Prostate gland (tissue), 2 donors: ENCODE measurements at regions of chr21 and their contacts with region 1.

Region 1: DNA sequence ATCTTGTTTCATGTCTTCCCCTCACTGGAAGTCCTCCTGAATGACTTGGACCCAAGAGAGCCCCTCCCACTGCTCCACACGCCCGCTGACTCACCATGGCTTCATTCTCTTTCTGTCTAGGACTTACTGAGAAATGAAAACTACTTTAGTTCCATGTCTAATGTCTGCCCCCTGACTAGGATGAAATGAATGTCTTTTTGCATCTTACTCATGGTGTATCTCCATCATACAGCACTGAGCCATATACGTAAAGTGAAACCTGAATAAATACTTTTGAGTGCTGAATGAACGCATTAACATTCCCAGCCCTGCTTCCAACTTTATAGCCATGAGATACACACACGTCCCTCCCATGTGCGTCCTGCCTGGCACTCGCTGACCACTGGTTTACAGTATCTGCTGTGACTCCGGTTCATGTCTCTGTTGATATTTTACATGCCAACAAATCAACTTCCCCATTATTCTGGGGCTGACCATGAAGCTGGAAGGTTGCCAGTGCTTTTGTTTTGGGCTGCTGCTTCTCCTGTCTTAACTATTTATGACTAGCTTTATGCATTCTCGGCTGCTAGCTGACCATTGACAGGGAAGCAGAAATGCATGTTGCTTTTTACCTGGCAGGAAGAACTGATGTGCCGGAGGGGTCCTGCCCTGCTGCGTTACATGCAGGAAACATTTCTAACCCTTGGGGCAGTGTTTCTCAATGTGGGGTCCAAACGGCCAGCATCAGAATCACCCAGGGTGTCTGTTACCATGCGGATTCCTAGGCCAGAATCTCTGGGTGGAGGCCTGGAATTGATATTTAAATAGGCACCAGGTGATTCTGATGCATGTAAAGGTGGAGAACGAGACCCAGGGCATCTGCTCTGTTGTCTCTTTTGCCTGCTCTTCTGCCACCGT is 182.4 kb downstream of the PCP4 start:
- DNase-seq: no peak
- H3K4me3 ChIP-seq: no peak overlapping the region
- H3K27ac ChIP-seq: peak overlapping the region in 1 of 2 donors; percentile 30
- H3K4me1 ChIP-seq: peaks cover 8% of the 10 kb centered on the region
- H3K27me3 ChIP-seq: no peaks in the 10 kb centered on the region
- CTCF ChIP-seq: no peak
- POLR2A ChIP-seq: no peak

Region 2: GRCh38 chr21:39776589-39776988 is 273.1 kb before region 1 on chr21:
- intact Hi-C with region 1: no loop called
- DNase-seq: no peak
- H3K4me3 ChIP-seq: no peak overlapping the region
- H3K27ac ChIP-seq: no peak overlapping the region
- H3K4me1 ChIP-seq: no peaks in the 10 kb centered on the region
- H3K27me3 ChIP-seq: peaks cover 2% of the 10 kb centered on the region
- CTCF ChIP-seq: no peak
- POLR2A ChIP-seq: no peak

Region 3: DNA sequence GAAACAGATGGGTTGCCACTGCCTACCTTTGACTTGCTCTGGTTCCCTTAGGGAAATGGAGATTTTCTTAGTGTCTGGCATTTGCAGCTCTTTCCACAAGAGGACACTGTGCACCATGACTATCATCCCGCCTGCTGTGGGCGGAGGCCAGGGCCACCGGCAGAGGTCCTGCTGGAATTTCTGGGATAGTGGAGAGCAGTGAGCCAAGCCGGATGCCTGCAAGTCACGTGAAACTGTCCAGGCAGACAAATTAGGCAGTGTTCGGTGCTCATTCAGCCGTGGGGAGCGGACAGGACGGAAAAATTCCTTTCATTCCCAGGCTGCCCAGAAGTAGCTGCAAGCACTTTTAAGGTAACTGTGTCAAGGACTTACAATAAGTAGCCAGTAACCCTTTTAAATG is 261.3 kb before region 1 on chr21:
- intact Hi-C with region 1: loop called (anchors 5 kb)
- DNase-seq: peak; percentile 89
- H3K4me3 ChIP-seq: peak overlapping the region; percentile 19 to 24
- H3K27ac ChIP-seq: peak overlapping the region in 1 of 2 donors; percentile 17
- H3K4me1 ChIP-seq: no peaks in the 10 kb centered on the region
- H3K27me3 ChIP-seq: no peaks in the 10 kb centered on the region
- CTCF ChIP-seq: peak; percentile 71 to 99 (median 90)
- POLR2A ChIP-seq: no peak

Region 4: GRCh38 chr21:39885119-39885848 is 164.4 kb before region 1 on chr21:
- intact Hi-C with region 1: loop called (anchors 5 kb)
- DNase-seq: no peak
- H3K4me3 ChIP-seq: no peak overlapping the region
- H3K27ac ChIP-seq: peak overlapping the region in 1 of 2 donors; percentile 27
- H3K4me1 ChIP-seq: no peaks in the 10 kb centered on the region
- H3K27me3 ChIP-seq: no peaks in the 10 kb centered on the region
- CTCF ChIP-seq: no peak
- POLR2A ChIP-seq: no peak

Region 5: DNA sequence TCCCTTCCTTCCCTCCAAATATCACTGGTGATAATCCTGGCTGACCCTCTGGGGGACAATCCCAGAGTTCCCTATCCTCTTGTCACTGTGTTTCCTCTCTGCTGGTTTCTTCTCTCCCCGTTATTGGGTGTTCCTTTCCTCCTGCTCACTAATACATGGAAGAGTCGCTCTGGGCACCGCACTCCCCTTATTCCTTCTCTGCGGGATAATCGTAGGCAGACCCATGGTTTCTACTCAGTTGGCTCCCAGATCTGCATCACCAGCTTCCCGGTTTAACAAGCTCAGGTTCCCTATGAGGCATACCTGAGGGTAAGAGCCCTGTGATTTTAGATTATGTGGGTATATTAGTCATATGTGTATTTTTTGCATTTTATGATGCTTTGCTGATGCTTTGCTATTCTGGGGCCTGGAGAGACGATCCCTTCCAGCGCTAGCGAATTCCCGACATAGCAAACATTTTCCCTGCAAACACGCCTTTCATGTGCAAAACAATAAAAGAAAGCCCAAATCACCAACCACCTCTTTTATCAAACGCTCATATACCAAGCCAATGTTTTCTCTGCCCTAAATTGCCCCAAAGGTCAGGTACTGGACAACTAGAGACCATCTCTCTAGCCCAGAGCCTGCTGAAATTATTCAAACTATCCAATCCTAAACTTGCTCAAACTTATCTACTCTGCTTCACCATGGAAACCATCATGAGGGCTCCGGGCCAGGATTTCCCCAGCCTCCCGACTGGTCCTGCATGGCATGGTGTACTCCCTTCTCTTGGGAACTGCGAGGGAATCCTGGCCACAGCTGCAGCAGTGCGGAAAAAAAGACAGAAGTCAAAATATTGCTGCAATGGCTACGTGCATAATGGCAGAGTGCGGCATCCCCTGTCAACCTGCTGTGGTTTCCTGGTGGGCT is 98.2 kb before region 1 on chr21:
- intact Hi-C with region 1: loop called (anchors 5 kb)
- DNase-seq: no peak
- H3K4me3 ChIP-seq: no peak overlapping the region
- H3K27ac ChIP-seq: peak overlapping the region in 1 of 2 donors; percentile 49
- H3K4me1 ChIP-seq: no peaks in the 10 kb centered on the region
- H3K27me3 ChIP-seq: no peaks in the 10 kb centered on the region
- CTCF ChIP-seq: no peak
- POLR2A ChIP-seq: no peak

Region 6: GRCh38 chr21:40385892-40386599 is 336.4 kb after region 1 on chr21:
- intact Hi-C with region 1: no loop called
- DNase-seq: peak; percentile 56
- H3K4me3 ChIP-seq: no peak overlapping the region
- H3K27ac ChIP-seq: no peak overlapping the region
- H3K4me1 ChIP-seq: no peaks in the 10 kb centered on the region
- H3K27me3 ChIP-seq: no peaks in the 10 kb centered on the region
- CTCF ChIP-seq: peak; percentile 70 to 88 (median 82)
- POLR2A ChIP-seq: no peak